ENCODE measurements at regions of chr2 and their contacts with region 1.

Region 1: DNA sequence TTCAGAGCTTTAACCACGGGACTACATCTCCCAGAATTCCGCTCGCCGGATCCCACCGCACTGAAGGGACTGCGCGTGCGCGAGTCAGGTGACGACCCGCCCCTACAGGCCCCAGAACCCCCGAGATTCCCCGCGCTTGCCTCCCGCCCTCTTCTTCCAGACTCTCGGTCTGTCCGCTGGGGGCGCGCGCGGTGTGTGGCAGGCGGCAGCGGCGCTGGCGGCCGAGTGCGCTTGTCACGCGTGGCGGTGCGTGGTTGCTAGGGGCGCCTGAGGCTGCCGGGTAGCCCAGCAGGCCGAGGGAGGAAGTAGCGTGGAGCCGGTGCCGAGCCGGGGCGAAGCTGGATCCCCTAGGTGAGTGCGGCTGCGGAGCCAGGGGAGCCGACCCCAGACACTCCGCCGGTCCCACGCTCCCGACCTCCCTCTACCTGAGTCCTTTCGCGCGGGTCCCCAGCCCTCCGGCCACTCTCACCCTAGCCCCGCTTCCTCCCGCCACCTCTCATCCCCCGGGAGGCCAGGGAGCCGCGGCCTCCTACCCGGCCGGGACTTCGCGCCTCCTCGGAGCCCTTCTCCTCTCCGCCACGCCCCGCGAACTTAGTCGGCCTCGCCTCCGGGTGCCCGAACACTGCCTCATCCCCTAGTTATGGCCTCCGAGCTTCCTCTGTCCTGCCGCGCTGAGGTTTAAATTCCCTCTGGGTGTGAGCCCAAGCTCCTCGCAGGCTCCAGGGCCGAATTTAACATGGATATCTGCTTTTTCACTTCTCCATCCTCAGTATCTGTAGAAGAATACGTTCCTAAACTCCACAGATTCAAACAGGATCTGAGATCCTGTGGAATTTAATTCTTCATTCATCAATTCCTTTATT is at the start of gene TTLL4:
- DNase-seq: peak; percentile 77 to 98
- H3K4me3 ChIP-seq: peak within 1 kb of the TSS; percentile 85 to 90 (median 89)
- H3K27ac ChIP-seq: peak within 1 kb of the TSS; percentile 46; the same call in 1 of the 2 replicates
- H3K4me1 ChIP-seq: peaks cover 0 to 4% (median 1%) of the 10 kb centered on the region in 4 experiments; a peak in 4 of 7 replicates
- H3K27me3 ChIP-seq: no peaks in the 10 kb centered on the region
- CTCF ChIP-seq: peak; percentile 78 to 79 (median 79)
- EP300 ChIP-seq: no peak
- POLR2A ChIP-seq: peak; percentile 66 to 76
- RAD21 ChIP-seq: peak; percentile 30 to 49; a peak in 2 of 4 replicates
- total RNA-seq, gene TTLL4: 105 and 106 TPM in 2 replicates

Region 2: GRCh38 chr2:218547978-218548377 is 162.9 kb before region 1 on chr2:
- CTCF ChIA-PET with region 1: no interaction called
- POLR2A ChIA-PET with region 1: no interaction called
- DNase-seq: no peak
- H3K4me3 ChIP-seq: no peak overlapping the region
- H3K27ac ChIP-seq: no peak overlapping the region
- H3K4me1 ChIP-seq: no peaks in the 10 kb centered on the region
- H3K27me3 ChIP-seq: peaks cover 0 to 1% (median 0%) of the 10 kb centered on the region in 4 experiments; a peak in 1 of 7 replicates
- CTCF ChIP-seq: no peak
- EP300 ChIP-seq: no peak
- POLR2A ChIP-seq: no peak
- RAD21 ChIP-seq: no peak

Region 3: DNA sequence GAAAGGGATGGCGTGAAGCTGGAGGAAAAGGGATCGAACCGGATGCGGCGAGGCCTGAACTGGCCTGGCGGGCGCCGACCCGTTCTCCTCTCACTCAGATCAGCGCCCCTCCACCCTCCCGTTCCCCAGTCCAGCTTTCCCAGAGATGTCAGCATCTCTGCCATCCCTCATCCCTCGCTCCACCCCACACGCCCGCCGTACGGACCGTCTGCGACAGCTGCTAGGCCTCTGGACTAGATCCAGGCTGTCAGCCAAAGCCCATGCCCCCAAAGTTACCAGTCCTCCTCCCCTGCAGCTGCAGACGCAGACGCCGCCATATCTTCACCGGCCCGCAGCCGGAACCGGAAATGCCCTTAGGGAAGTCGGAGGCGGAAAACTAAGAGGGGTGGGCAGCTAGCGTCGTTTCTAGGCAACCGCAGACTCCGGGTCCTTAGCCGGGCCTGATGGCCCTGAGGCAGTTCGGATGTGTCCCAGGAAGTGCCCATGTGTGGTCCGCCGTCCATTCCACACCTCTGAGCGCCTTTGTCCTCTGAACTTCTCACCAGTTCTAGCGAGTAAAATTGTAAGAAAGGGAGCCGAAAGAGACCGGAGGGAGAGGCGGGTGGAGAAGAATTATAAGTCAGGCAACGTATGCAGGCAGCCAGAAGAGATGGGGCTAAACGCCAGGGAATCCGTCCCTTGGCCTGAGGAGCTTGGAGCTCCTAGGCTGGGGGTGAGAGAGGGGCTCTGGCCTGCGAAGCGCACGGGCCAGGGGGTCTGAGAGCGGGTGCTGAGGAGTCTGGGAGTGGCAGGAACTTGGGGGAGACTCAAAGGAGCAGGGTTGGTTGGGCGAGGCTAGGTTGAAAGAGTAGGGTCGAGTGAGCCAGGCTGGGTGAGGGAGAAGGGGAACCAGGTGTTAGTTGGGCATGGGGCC is 39.0 kb before region 1 on chr2 and contains the starts of genes RNF25 and STK36:
- CTCF ChIA-PET with region 1: interaction called, 4 read pairs
- POLR2A ChIA-PET with region 1: interaction called, 14 read pairs
- DNase-seq: peak; percentile 74 to 85
- H3K4me3 ChIP-seq: peak within 1 kb of the TSS; percentile 96 to 99 (median 96)
- H3K27ac ChIP-seq: peak within 1 kb of the TSS; percentile 86
- H3K4me1 ChIP-seq: peaks cover 0 to 4% (median 1%) of the 10 kb centered on the region in 4 experiments; a peak in 3 of 7 replicates
- H3K27me3 ChIP-seq: no peaks in the 10 kb centered on the region
- CTCF ChIP-seq: no peak
- EP300 ChIP-seq: no peak
- POLR2A ChIP-seq: peak; percentile 70 to 74
- RAD21 ChIP-seq: no peak
- total RNA-seq, gene RNF25: 19.6 and 24.7 TPM in 2 replicates
- total RNA-seq, gene STK36: 34.9 and 41.4 TPM in 2 replicates

Region 4: DNA sequence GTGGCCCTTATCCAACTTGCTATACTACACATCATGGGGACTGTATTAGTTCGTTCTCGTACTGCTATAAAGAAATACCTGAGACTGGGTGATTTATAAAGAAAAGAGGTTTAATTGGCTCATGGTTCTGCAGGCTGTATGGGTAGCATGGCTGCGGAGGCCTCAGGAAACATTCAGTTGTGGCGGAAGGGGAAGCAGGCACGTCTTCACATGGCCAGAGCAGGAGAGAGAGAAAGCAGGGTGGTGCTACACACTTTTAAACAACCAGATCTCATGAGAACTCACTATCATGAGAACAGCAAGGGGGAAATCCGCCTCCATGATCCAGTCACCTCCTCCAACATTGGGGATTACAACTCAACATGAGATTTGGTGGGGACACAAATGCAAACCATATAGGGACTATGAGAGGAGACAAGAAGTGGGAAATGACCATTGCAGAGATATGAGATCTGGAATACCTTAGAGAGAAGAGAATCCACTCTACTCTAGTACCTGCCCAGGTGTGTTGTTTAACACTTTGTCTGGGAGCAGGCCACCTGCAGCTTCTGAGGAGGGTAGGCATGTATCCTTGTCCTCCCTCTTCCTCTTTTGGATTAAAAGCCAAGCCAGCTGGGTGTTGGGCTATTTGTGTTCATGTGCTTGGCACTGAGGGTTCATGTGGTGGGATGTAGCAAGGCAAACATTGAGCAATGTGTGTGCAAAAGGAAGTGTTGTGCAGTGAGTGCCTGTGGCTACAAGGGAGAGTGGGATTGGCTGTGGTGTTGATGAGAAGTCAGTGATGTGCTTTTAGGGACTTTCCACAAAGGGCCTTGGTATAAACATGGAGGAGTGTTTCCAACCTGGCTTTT is 22.5 kb after region 1 on chr2:
- CTCF ChIA-PET with region 1: interaction called, 16 read pairs
- POLR2A ChIA-PET with region 1: interaction called, 7 read pairs
- DNase-seq: no peak
- H3K4me3 ChIP-seq: no peak overlapping the region
- H3K27ac ChIP-seq: no peak overlapping the region
- H3K4me1 ChIP-seq: peaks cover 0 to 17% (median 6%) of the 10 kb centered on the region in 4 experiments; a peak in 5 of 7 replicates
- H3K27me3 ChIP-seq: no peaks in the 10 kb centered on the region
- CTCF ChIP-seq: no peak
- EP300 ChIP-seq: no peak
- POLR2A ChIP-seq: no peak
- RAD21 ChIP-seq: no peak

Region 5: GRCh38 chr2:218748741-218749441 is 38.0 kb after region 1 on chr2:
- CTCF ChIA-PET with region 1: no interaction called
- POLR2A ChIA-PET with region 1: no interaction called
- DNase-seq: no peak
- H3K4me3 ChIP-seq: no peak overlapping the region
- H3K27ac ChIP-seq: no peak overlapping the region
- H3K4me1 ChIP-seq: no peaks in the 10 kb centered on the region
- H3K27me3 ChIP-seq: no peaks in the 10 kb centered on the region
- CTCF ChIP-seq: no peak
- EP300 ChIP-seq: no peak
- POLR2A ChIP-seq: no peak
- RAD21 ChIP-seq: no peak